T-cell (primary cell): ENCODE measurements at regions of chr2 and their contacts with region 1.

Region 1: DNA sequence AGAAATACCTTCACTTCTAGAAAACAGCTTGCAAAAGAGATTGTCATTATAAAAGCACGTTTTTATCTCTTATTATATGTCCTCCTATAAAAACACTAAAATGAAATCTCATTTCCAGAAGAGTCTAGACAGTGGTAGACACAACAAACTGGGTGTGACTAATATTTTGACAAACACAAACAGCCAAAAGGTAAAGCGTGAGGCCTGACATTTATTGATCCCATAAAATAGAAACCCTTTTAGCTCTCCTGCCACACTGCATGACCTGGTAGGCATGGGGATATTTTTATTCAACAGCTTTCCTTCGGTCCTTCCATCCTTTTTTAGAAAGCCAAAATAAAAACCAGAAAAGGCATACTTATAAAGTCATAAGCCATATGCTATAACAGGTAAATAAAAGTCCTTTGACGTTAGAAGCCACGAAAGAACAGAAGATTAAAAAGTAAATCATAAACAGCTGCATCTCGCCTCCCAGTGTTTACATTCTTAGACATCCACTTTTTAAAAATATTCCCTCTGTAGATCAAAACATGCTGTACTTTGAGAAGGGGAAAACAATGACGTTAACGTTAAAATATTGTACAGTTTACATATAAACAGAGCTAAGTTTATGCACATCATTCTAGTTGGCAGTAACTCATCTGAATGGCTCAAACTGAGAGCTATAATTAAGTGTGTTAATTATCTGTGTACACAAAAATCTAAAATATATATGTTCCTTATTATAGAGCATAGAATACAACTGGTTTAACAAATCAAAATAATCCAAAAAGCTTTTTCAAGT is 44.6 kb downstream of the IRS1 start:
- DNase-seq: no peak
- ATAC-seq: no peak
- H3K4me3 ChIP-seq: no peak overlapping the region
- H3K4me3 Mint-ChIP-seq: no peak overlapping the region
- H3K27ac ChIP-seq: no peak overlapping the region
- H3K27ac Mint-ChIP-seq: no peak overlapping the region
- H3K4me1 ChIP-seq: no peaks in the 10 kb centered on the region
- H3K4me1 Mint-ChIP-seq: no peaks in the 10 kb centered on the region
- H3K27me3 ChIP-seq: peaks cover 0 to 2% of the 10 kb centered on the region in 2 experiments
- H3K27me3 Mint-ChIP-seq: no peaks in the 10 kb centered on the region

Region 2: DNA sequence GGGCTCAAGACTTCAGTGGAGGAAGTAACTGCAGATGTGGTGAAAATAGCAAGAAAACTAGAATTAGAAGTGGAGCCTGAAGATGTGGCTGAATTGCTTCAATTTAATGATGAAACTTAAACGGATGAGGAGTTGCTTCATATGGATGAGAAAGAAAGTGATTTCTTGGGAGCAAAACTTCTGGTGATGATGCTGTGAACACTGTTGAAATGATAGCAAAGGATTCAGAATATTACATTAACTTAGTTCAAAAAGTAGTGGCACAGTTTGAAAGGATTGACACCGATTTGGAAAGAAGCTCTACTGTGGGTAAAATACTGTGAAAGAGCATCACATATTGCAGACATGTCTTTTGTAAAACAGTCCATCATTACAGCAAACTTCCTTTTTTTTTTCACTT is 717.5 kb before region 1 on chr2:
- CTCF ChIA-PET with region 1: interaction called in 1 of 2 experiments, 13 read pairs
- POLR2A ChIA-PET with region 1: no interaction called
- DNase-seq: no peak
- ATAC-seq: no peak
- H3K4me3 ChIP-seq: no peak overlapping the region
- H3K4me3 Mint-ChIP-seq: no peak overlapping the region
- H3K27ac ChIP-seq: no peak overlapping the region
- H3K27ac Mint-ChIP-seq: no peak overlapping the region
- H3K4me1 ChIP-seq: no peaks in the 10 kb centered on the region
- H3K4me1 Mint-ChIP-seq: no peaks in the 10 kb centered on the region
- H3K27me3 ChIP-seq: peaks cover 0 to 4% of the 10 kb centered on the region in 2 experiments
- H3K27me3 Mint-ChIP-seq: peaks cover 8 to 29% of the 10 kb centered on the region in 2 donors